ENCODE measurements at regions of chr5 and their contacts with region 1.

Region 1: GRCh38 chr5:40834849-40835787 is at the start of gene RPL37:
- DNase-seq: peak in 1 of 2 donors; percentile 97
- H3K4me3 ChIP-seq: peak within 1 kb of the TSS; percentile 54 to 60
- H3K27ac ChIP-seq: peak within 1 kb of the TSS; percentile 90
- H3K4me1 ChIP-seq: peaks cover 21% of the 10 kb centered on the region
- H3K27me3 ChIP-seq: no peaks in the 10 kb centered on the region
- CTCF ChIP-seq: no peak
- POLR2A ChIP-seq: peak in 1 of 2 donors; percentile 34
- total RNA-seq, gene RPL37: 489 TPM

Region 2: GRCh38 chr5:40743771-40744170 is 91.3 kb before region 1 on chr5:
- intact Hi-C with region 1: no loop called
- DNase-seq: no peak
- H3K4me3 ChIP-seq: no peak overlapping the region
- H3K27ac ChIP-seq: no peak overlapping the region
- H3K4me1 ChIP-seq: no peaks in the 10 kb centered on the region
- H3K27me3 ChIP-seq: no peaks in the 10 kb centered on the region
- CTCF ChIP-seq: no peak
- POLR2A ChIP-seq: no peak

Region 3: DNA sequence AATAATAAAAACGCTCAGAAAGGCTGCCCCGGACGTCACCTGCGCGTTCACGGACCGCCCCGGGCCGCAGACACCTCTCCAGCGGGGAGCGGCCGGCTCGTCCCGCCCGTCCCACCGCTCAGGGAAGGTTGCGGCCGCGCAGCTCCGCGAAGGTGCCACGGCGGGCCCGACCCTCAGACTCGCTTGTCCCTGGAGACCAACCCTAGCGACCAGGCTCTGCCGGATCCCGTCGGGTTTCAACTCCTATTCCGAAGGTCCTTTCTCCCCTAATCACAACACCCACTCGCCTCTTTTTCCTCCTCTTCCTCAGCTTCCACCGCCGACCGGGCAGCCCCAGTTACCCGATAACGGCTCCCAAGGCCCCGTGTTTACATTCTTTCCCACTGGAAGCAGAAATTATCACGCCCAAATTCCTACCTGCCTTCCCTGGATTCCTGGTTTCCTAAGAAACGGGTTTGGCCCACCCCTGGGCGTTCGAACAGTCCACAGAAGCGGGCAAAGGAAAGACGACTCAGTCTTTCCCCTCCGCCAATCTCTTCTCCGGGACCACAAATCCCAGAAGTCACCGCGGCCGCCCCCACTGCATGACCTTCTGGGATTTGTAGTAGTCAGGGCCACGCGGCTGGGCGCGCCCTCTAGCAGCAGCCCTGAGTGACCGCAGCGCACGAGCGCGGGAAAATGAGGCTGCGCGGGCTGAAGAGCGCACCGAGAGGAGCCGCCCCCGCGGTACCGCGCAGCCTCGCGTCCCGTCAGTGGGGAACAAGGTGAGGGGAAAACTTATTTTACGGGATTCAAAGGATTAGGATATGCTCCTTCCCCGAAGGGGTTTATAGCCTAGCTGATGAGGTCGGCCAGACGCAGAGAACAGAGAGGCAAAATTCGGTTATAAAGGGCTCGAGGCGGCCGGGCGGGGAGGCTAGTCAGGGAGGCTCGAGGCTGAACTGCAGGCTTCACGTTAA is 79.4 kb before region 1 on chr5 and contains the start of gene TTC33:
- intact Hi-C with region 1: loop called (anchors 10 kb)
- DNase-seq: peak in 1 of 2 donors; percentile 94
- H3K4me3 ChIP-seq: peak within 1 kb of the TSS; percentile 93 to 95
- H3K27ac ChIP-seq: peak within 1 kb of the TSS; percentile 92
- H3K4me1 ChIP-seq: peaks cover 22% of the 10 kb centered on the region
- H3K27me3 ChIP-seq: no peaks in the 10 kb centered on the region
- CTCF ChIP-seq: peak; percentile 57 to 76 (median 72)
- POLR2A ChIP-seq: peak in 1 of 2 donors; percentile 69
- total RNA-seq, gene TTC33: 12.8 TPM

Region 4: GRCh38 chr5:40770764-40771163 is 64.4 kb before region 1 on chr5:
- intact Hi-C with region 1: no loop called
- DNase-seq: no peak
- H3K4me3 ChIP-seq: no peak overlapping the region
- H3K27ac ChIP-seq: no peak overlapping the region
- H3K4me1 ChIP-seq: peaks cover under 1% of the 10 kb centered on the region
- H3K27me3 ChIP-seq: no peaks in the 10 kb centered on the region
- CTCF ChIP-seq: no peak
- POLR2A ChIP-seq: no peak

Region 5: GRCh38 chr5:40781843-40782409 is 53.2 kb before region 1 on chr5:
- intact Hi-C with region 1: no loop called
- DNase-seq: no peak
- H3K4me3 ChIP-seq: no peak overlapping the region
- H3K27ac ChIP-seq: no peak overlapping the region
- H3K4me1 ChIP-seq: peaks cover 25% of the 10 kb centered on the region
- H3K27me3 ChIP-seq: no peaks in the 10 kb centered on the region
- CTCF ChIP-seq: no peak
- POLR2A ChIP-seq: no peak

Region 6: DNA sequence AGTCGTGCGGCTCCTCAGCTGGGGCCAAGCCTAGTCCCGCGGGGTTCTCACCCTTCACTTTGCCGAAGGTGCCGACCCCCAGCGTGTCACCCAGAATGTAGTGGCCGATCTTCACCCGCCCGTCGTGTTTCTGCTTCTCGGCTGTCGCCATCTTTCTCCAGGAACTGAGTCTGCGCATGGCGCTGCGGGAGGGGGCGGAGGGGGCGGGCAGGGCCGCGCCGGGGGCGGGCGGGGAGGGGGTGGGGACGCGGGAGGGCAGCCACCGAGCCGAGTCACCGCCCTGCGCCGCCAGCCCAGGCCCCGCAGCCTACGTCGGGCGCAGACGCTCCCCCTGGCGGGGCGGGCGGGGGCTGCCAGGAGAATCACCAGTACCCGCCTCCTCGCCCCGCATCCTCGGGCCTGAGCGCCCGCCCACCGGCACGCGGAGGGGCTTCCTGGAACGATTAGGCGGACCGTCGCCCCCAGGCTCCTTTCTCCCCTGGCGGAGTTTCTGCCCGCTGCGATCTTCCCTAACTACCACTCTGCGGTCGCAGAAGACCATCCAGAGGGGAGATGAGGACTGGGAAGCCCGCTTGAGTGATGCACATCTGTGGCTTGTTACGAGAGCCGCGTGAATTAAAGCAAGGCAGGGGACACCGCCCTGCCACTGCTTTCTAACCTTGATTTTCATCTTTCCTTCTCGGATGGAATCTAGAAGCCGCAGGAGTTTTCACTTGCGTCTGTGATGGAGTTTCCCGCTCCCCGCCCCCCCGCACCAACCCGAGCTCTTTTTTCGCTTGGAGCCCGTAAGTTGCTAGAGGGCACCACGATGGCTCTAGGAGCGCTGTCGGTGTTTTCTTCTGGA is 36.9 kb before region 1 on chr5 and contains the start of gene PRKAA1:
- intact Hi-C with region 1: loop called (anchors 1 kb)
- DNase-seq: peak in 1 of 2 donors; percentile 93
- H3K4me3 ChIP-seq: peak within 1 kb of the TSS; percentile 88 to 99
- H3K27ac ChIP-seq: peak within 1 kb of the TSS; percentile 98
- H3K4me1 ChIP-seq: peaks cover 48% of the 10 kb centered on the region
- H3K27me3 ChIP-seq: no peaks in the 10 kb centered on the region
- CTCF ChIP-seq: peak in 2 of 3 experiments; percentile 29 to 46
- POLR2A ChIP-seq: peak in 1 of 2 donors; percentile 82
- total RNA-seq, gene PRKAA1: 69.0 TPM

Region 7: DNA sequence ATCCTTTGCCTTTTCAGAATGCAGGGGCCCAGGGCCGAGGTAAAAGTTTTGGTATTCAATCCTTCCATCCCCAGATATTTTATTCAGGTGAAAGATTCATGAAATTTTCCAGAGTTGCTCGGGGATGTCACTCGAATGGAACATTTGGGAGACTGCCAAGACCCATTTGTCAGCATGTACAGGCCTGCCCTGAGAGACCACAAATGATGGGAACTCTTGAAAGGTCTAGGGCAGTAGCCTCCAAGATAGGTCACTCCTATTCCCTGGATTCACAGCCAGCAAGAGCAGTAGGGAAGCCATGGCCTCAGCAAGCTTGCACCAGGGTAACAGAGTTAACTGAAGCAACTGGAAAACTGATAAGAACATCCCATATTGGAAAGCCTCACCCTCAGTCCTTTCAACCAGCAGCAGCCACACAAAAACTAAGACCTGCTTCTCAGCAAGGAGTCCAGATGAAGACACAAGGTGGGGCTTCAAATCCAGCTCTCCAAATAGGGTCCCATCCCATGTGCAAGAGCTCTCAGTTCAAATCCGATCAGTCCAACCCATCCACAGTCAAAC is 18.6 kb after region 1 on chr5:
- intact Hi-C with region 1: no loop called
- DNase-seq: peak in 1 of 2 donors; percentile 34
- H3K4me3 ChIP-seq: no peak overlapping the region
- H3K27ac ChIP-seq: no peak overlapping the region
- H3K4me1 ChIP-seq: no peaks in the 10 kb centered on the region
- H3K27me3 ChIP-seq: no peaks in the 10 kb centered on the region
- CTCF ChIP-seq: no peak
- POLR2A ChIP-seq: no peak